Activated CD4-positive, alpha-beta memory T cell treated with anti-CD3 and anti-CD28 coated beads for 36 hours (primary cell): ENCODE measurements at regions of chr4 and their contacts with region 1.

Region 1: DNA sequence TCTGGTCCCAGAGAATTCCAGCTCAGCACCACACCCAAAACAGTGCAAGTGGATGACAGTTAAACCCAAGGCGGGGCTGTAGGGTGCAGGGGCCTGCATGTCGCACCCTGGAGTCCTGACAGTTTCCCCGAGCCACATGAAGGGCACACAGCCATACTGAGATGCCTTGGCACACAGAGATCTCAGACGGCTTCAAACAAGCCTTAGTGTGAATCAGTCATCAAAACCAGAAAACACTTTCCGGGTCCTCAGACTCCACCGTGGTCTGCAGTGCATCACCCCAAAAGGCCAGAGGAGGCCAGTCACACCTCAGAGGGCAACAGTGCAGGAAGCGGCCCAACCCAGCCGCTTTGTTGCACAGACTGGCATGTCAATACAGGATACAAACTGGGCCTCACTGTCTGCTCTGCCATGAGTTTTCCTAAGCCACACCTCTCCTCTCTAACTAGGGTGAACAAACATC is 64.6 kb upstream of the ENPP6 start:
- DNase-seq: peak; percentile 87
- H3K4me3 Mint-ChIP-seq: peak overlapping the region; percentile 10
- H3K27ac Mint-ChIP-seq: peak overlapping the region; percentile 91
- H3K4me1 Mint-ChIP-seq: peaks cover 71% of the 10 kb centered on the region
- H3K27me3 Mint-ChIP-seq: peaks cover 4% of the 10 kb centered on the region

Region 2: GRCh38 chr4:183936574-183937345 is 345.5 kb before region 1 on chr4:
- CTCF ChIA-PET with region 1: no interaction called
- POLR2A ChIA-PET with region 1: no interaction called
- intact Hi-C with region 1: no loop called
- DNase-seq: no peak
- H3K4me3 Mint-ChIP-seq: no peak overlapping the region
- H3K27ac Mint-ChIP-seq: no peak overlapping the region
- H3K4me1 Mint-ChIP-seq: no peaks in the 10 kb centered on the region
- H3K27me3 Mint-ChIP-seq: peaks cover 2% of the 10 kb centered on the region

Region 3: GRCh38 chr4:184310171-184310567 is 27.9 kb after region 1 on chr4:
- CTCF ChIA-PET with region 1: interaction called, 8 read pairs
- POLR2A ChIA-PET with region 1: no interaction called
- intact Hi-C with region 1: loop called (anchors 1 kb)
- DNase-seq: peak; percentile 81
- H3K4me3 Mint-ChIP-seq: peak overlapping the region; percentile 4
- H3K27ac Mint-ChIP-seq: peak overlapping the region; percentile 72
- H3K4me1 Mint-ChIP-seq: peaks cover 52% of the 10 kb centered on the region
- H3K27me3 Mint-ChIP-seq: no peaks in the 10 kb centered on the region

Region 4: GRCh38 chr4:184318852-184319251 is 36.6 kb after region 1 on chr4:
- CTCF ChIA-PET with region 1: interaction called, 5 read pairs
- POLR2A ChIA-PET with region 1: no interaction called
- intact Hi-C with region 1: loop called (anchors 1 kb)
- DNase-seq: no peak
- H3K4me3 Mint-ChIP-seq: no peak overlapping the region
- H3K27ac Mint-ChIP-seq: no peak overlapping the region
- H3K4me1 Mint-ChIP-seq: peaks cover 34% of the 10 kb centered on the region
- H3K27me3 Mint-ChIP-seq: peaks cover 1% of the 10 kb centered on the region

Region 5: DNA sequence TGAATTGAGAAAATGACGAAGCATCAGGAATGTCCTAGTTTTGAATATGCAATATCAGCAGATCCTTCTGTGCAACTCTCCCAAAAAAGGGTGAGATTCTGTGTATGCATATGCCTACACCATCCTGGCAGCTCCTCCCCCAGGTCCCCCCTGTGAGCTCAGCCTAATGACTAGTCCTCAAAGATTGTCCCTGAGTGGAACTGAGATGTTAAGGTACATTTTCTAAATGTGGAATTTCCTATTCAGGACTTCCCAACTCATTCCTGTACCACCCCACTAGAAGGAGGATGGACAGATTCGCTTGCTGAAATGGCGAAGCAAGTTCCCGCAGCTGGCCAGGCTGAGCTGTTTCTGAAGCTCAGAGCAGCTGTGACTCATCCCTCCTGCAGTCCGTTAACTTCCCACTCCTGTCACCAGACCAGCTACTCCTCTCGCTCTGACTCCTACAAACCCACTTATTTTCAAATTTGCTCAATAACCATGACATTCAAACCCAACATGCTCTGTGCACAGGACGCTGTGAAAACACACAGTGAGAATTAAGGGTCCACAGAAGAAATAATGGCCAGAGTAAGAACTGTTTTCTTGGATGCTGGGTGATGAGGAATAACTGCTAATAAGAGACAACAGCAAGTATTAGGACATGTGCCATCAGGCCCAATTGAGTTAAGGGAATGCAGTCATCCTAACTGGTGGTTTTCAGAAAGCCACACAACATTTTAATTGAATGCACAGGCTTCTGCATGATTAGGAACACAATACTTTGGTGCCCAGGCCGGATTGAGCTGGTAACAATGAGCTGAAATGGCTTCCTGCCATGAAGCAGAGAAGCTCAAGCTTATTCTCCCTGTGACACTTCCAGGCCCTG is 232.1 kb after region 1 on chr4:
- CTCF ChIA-PET with region 1: interaction called, 27 read pairs
- POLR2A ChIA-PET with region 1: interaction called, 11 read pairs
- intact Hi-C with region 1: loop called (anchors 1 kb)
- DNase-seq: peak; percentile 90
- H3K4me3 Mint-ChIP-seq: peak overlapping the region; percentile 38
- H3K27ac Mint-ChIP-seq: peak overlapping the region; percentile 88
- H3K4me1 Mint-ChIP-seq: peaks cover 42% of the 10 kb centered on the region
- H3K27me3 Mint-ChIP-seq: no peaks in the 10 kb centered on the region

Region 6: DNA sequence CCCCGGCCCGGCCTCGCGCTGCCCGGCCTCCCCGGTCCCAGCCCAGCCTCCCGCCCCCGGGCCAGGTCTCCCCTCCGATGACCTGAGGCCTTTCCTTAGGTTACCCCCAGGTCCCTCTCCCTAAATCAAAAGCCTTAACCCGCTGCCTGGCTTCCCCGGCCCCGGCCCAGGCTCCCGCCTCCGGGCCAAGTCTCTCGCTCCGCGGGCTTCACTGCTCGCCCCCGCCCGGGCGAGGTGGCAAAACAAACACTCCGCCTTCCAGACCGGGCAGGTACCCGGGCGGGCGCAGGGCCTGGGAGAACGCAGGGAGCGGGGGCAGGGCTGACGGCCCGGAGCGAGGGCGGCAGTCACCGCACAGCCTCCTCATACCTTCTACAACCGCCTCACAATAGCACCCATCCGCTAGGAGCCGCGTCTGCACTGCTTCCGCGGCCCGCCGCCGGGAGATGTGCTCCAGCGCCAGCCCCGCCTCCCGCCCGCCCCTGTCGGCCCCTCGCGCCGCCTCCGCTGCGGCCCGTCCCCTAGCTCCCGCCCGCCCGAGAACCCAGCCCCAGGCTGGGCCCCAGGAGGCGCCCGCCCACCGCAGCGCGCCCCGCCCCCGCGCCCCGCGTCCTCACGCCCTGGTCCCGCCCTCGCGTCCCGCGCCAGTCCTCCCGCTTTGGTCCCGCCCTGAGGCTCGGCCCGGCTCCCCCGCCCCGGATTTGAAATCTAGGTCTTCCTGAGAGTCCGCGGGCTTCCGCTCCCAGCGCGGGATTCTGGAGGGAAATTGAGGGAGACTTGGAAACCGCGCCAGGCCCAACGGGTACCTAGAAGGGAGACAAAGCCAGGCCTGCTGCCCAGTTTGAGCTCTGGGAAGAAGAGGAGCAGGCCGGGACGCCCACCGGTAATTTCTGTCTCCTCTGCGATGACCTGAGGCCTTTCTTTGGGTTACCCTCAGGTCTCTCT is 367.0 kb after region 1 on chr4 and contains the starts of genes CASP3 and PRIMPOL:
- CTCF ChIA-PET with region 1: interaction called, 8 read pairs
- POLR2A ChIA-PET with region 1: interaction called, 3 read pairs
- intact Hi-C with region 1: loop called (anchors 5 kb)
- DNase-seq: peak; percentile 98
- H3K4me3 Mint-ChIP-seq: peak within 1 kb of the TSS; percentile 91
- H3K27ac Mint-ChIP-seq: peak within 1 kb of the TSS; percentile 91
- H3K4me1 Mint-ChIP-seq: peaks cover 50% of the 10 kb centered on the region
- H3K27me3 Mint-ChIP-seq: no peaks in the 10 kb centered on the region
- total RNA-seq, gene CASP3: 54.0 to 54.4 TPM
- total RNA-seq, gene PRIMPOL: 23.1 to 27.1 TPM